Sigmoid colon (tissue), 7 donors: ENCODE measurements at regions of chr4 and their contacts with region 1.

Region 1: DNA sequence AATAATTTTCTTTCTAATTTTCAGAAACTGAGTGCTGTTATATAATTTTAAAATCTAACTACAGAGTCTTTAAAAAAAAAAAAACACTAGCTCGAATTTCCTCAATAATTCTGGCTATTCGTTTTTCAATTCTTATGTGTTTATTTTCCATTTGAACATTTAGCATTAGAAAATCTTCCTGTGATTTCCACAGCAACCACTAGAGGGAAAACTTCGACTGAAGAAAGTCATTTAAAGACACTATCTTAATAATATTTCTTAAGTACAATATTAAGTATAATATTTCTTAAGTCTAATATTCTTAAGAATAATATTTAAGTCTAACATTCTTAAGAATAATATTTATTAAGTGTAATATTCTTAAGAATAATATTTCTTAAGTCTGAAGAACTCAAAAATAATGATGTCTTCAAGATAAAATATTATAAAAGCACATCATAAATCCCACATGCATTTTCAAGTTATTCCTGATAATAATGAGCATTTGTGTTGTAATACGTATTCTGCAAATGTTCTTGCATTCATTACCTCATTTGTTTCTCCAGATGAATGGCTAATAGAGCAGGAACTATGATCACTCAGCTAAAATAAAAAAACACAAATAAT is 118.4 kb upstream of the WDR17 start:
- DNase-seq: no peak
- H3K4me3 ChIP-seq: peak overlapping the region in 1 of 4 donors; percentile 9
- H3K27ac ChIP-seq: no peak overlapping the region
- H3K4me1 ChIP-seq: peaks cover 0 to 13% (median 3%) of the 10 kb centered on the region in 4 donors
- H3K27me3 ChIP-seq: no peaks in the 10 kb centered on the region
- CTCF ChIP-seq: peak in 2 of 4 experiments; percentile 33 to 70
- EP300 ChIP-seq: no peak
- POLR2A ChIP-seq: no peak

Region 2: GRCh38 chr4:176002007-176002613 is 54.9 kb after region 1 on chr4:
- intact Hi-C with region 1: loop called (anchors 5 kb)
- DNase-seq: peak; percentile 74
- H3K4me3 ChIP-seq: peak overlapping the region; percentile 68 to 75 (median 73)
- H3K27ac ChIP-seq: peak overlapping the region; percentile 82 to 89 (median 86)
- H3K4me1 ChIP-seq: peaks cover 0 to 22% (median 17%) of the 10 kb centered on the region in 4 donors
- H3K27me3 ChIP-seq: no peaks in the 10 kb centered on the region
- CTCF ChIP-seq: no peak
- EP300 ChIP-seq: no peak
- POLR2A ChIP-seq: peak in 1 of 2 donors; percentile 23

Region 3: GRCh38 chr4:176065435-176066291 is 118.4 kb after region 1 on chr4 and contains the start of gene WDR17:
- intact Hi-C with region 1: loop called (anchors 10 kb)
- DNase-seq: peak; percentile 96
- H3K4me3 ChIP-seq: peak within 1 kb of the TSS; percentile 58 to 62 (median 60)
- H3K27ac ChIP-seq: peak within 1 kb of the TSS; percentile 53 to 68 (median 58)
- H3K4me1 ChIP-seq: peaks cover 0 to 14% (median 3%) of the 10 kb centered on the region in 4 donors
- H3K27me3 ChIP-seq: no peaks in the 10 kb centered on the region
- CTCF ChIP-seq: no peak
- EP300 ChIP-seq: no peak
- POLR2A ChIP-seq: no peak
- total RNA-seq, gene WDR17: 4.8 to 11.0 (median 6.8) TPM